Ovary (tissue), 10 donors: ENCODE measurements at regions of chr5 and their contacts with region 1.

Region 1: GRCh38 chr5:24428345-24428744 is 216.4 kb downstream of the CDH10 start:
- DNase-seq: no peak
- H3K4me3 ChIP-seq: no peak overlapping the region
- H3K27ac ChIP-seq: no peak overlapping the region
- H3K4me1 ChIP-seq: no peaks in the 10 kb centered on the region
- H3K27me3 ChIP-seq: no peaks in the 10 kb centered on the region
- CTCF ChIP-seq: no peak
- EP300 ChIP-seq: no peak
- POLR2A ChIP-seq: no peak

Region 2: DNA sequence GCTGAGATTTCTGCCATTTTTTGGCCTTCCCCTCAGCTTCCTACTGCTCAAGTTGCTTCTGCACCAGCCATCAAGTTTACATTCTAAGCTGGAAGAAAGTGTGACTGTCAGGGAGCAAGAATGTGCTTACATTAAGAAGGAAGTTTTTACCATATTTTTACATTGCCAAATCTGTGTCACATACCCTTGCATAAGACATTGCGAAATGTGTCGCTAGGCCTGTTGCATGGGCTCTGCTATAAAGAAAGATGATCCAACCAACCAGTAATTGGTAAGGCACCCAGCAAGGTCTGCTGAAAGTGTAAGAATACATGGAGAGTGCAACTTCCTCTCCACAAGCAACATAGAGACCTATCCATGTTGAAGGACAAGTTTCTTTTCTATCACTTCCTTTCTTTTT is 476.8 kb after region 1 on chr5:
- intact Hi-C with region 1: loop called in 1 of 4 experiments (anchors 5 kb)
- DNase-seq: no peak
- H3K4me3 ChIP-seq: no peak overlapping the region
- H3K27ac ChIP-seq: no peak overlapping the region
- H3K4me1 ChIP-seq: no peaks in the 10 kb centered on the region
- H3K27me3 ChIP-seq: no peaks in the 10 kb centered on the region
- CTCF ChIP-seq: no peak
- EP300 ChIP-seq: no peak
- POLR2A ChIP-seq: no peak